ENCODE measurements at regions of chr16 and their contacts with region 1.

Region 1: DNA sequence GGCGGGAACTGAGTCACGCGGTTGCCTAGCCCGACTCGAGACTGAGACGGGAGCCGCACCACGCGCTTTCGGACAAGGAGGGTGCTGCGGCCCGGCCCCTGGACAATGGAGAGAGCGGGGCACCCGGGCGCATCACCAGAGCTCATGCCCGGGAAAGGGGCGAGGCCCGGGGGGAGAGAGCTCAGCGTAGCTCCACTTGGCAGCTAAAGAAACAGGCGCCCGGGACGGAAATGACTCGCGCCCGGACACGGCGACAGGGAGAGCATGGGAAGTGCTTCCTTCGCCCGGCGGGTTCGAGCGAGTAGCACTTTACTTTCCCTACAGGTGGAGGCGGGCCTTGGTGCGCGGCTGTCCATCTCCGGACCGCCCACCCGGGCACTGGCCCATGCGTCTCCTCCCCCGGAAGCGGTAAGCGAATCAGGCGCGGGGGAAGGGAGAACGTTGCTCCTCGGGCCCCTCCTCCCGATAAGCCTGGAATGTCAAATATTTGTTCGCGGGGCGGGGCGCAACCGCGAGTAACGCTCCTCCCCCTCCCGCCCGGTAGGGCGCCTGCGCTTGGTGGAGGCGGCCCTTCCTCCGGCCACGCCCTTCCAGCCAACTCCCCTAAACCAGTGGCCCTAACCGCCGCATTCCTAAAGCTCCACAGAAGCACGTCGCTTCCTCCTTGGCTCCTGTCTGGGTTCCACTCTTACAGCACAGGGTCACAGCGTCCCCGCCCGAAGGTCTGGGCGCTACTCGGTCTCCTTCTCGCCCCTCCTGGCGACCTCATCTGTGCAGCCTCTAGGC is 1.5 kb upstream of the ESRP2 start:
- H3K4me3 ChIP-seq: peak overlapping the region; percentile 40
- H3K27ac ChIP-seq: peak overlapping the region; percentile 75
- H3K4me1 ChIP-seq: peaks cover 7% of the 10 kb centered on the region; the same call in 1 of the 2 replicates
- CTCF ChIP-seq: peak; percentile 14; the same call in 1 of the 2 replicates

Region 2: GRCh38 chr16:68085259-68086071 is 152.0 kb before region 1 on chr16 and contains the start of gene NFATC3:
- CTCF ChIA-PET with region 1: interaction called, 3 read pairs
- POLR2A ChIA-PET with region 1: interaction called, 34 read pairs
- H3K4me3 ChIP-seq: peak within 1 kb of the TSS; percentile 77
- H3K27ac ChIP-seq: peak within 1 kb of the TSS; percentile 88
- H3K4me1 ChIP-seq: peaks cover 14% of the 10 kb centered on the region
- CTCF ChIP-seq: peak; percentile 53; the same call in 1 of the 2 replicates

Region 3: GRCh38 chr16:68128577-68129305 is 108.7 kb before region 1 on chr16:
- CTCF ChIA-PET with region 1: no interaction called
- POLR2A ChIA-PET with region 1: interaction called, 16 read pairs
- H3K4me3 ChIP-seq: no peak overlapping the region
- H3K27ac ChIP-seq: no peak overlapping the region
- H3K4me1 ChIP-seq: no peaks in the 10 kb centered on the region
- CTCF ChIP-seq: no peak

Region 4: DNA sequence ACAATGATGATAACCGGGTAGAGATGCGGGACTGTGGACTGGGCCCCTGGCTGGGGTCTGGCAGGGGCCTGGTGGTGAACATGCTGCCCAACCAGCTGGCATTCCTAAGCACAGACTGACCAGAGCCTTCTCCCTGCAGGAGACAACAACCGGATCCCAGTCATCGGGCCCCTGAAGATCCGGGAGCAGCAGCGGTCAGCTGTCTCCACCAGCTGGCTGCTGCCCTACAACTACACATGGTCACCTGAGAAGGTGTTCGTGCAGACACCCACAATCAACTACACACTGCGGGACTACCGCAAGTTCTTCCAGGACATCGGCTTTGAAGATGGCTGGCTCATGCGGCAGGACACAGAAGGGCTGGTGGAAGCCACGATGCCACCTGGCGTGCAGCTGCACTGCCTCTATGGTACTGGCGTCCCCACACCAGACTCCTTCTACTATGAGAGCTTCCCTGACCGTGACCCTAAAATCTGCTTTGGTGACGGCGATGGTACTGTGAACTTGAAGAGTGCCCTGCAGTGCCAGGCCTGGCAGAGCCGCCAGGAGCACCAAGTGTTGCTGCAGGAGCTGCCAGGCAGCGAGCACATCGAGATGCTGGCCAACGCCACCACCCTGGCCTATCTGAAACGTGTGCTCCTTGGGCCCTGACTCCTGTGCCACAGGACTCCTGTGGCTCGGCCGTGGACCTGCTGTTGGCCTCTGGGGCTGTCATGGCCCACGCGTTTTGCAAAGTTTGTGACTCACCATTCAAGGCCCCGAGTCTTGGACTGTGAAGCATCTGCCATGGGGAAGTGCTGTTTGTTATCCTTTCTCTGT is 21.8 kb after region 1 on chr16:
- CTCF ChIA-PET with region 1: interaction called, 5 read pairs
- POLR2A ChIA-PET with region 1: interaction called, 12 read pairs
- H3K4me3 ChIP-seq: no peak overlapping the region
- H3K27ac ChIP-seq: no peak overlapping the region
- H3K4me1 ChIP-seq: no peaks in the 10 kb centered on the region
- CTCF ChIP-seq: no peak

Region 5: GRCh38 chr16:68283801-68284598 is 46.6 kb after region 1 on chr16:
- CTCF ChIA-PET with region 1: no interaction called
- POLR2A ChIA-PET with region 1: no interaction called
- H3K4me3 ChIP-seq: no peak overlapping the region
- H3K27ac ChIP-seq: no peak overlapping the region
- H3K4me1 ChIP-seq: no peaks in the 10 kb centered on the region
- CTCF ChIP-seq: no peak

Measured in HEK293 (cell line).